Thyroid gland (tissue), 4 donors: ENCODE measurements at regions of chr18 and their contacts with region 1.

Region 1: DNA sequence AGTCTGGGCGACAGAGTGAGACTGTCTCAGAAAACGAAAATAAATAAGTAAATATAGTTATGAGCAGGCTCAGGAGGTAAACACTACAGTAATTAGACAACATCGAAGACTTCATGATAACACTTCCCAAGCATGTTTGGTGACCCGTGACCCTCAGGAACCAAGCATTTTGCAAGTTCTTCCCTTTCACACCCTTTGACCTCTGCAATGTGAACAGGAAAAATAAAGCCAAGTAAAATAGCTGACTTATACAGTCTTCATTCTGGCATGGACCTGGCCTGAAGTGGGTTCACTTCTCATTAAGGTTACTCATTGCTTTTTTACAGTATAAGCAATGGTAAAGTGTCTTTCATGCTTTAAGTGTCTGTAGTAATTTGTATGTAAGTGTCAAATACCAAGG is 15.3 kb upstream of the TGIF1 start:
- DNase-seq: no peak
- H3K4me3 ChIP-seq: no peak overlapping the region
- H3K27ac ChIP-seq: no peak overlapping the region
- H3K4me1 ChIP-seq: no peaks in the 10 kb centered on the region
- H3K27me3 ChIP-seq: no peaks in the 10 kb centered on the region
- CTCF ChIP-seq: no peak
- POLR2A ChIP-seq: no peak

Region 2: GRCh38 chr18:2776601-2777000 is 658.1 kb before region 1 on chr18:
- intact Hi-C with region 1: no loop called
- DNase-seq: no peak
- H3K4me3 ChIP-seq: no peak overlapping the region
- H3K27ac ChIP-seq: no peak overlapping the region
- H3K4me1 ChIP-seq: no peaks in the 10 kb centered on the region
- H3K27me3 ChIP-seq: no peaks in the 10 kb centered on the region
- CTCF ChIP-seq: no peak
- POLR2A ChIP-seq: no peak

Region 3: GRCh38 chr18:3297025-3297984 is 137.4 kb before region 1 on chr18:
- intact Hi-C with region 1: loop called (anchors 10 kb)
- DNase-seq: peak; percentile 95 to 98
- H3K4me3 ChIP-seq: peak overlapping the region; percentile 35 to 51 (median 42)
- H3K27ac ChIP-seq: peak overlapping the region in 1 of 3 donors; percentile 38
- H3K4me1 ChIP-seq: peaks cover 0 to 5% of the 10 kb centered on the region in 2 donors
- H3K27me3 ChIP-seq: no peaks in the 10 kb centered on the region
- CTCF ChIP-seq: peak in 4 of 6 experiments; percentile 22 to 75 (median 41)
- POLR2A ChIP-seq: peak in 1 of 2 donors; percentile 64

Region 4: GRCh38 chr18:3664563-3665178 is 230.0 kb after region 1 on chr18:
- intact Hi-C with region 1: loop called (anchors 5 kb)
- DNase-seq: no peak
- H3K4me3 ChIP-seq: no peak overlapping the region
- H3K27ac ChIP-seq: no peak overlapping the region
- H3K4me1 ChIP-seq: peaks cover 7 to 17% of the 10 kb centered on the region in 2 donors
- H3K27me3 ChIP-seq: no peaks in the 10 kb centered on the region
- CTCF ChIP-seq: no peak
- POLR2A ChIP-seq: no peak